Heart right ventricle (tissue), 16 donors: ENCODE measurements at regions of chr12 and their contacts with region 1.

Region 1: DNA sequence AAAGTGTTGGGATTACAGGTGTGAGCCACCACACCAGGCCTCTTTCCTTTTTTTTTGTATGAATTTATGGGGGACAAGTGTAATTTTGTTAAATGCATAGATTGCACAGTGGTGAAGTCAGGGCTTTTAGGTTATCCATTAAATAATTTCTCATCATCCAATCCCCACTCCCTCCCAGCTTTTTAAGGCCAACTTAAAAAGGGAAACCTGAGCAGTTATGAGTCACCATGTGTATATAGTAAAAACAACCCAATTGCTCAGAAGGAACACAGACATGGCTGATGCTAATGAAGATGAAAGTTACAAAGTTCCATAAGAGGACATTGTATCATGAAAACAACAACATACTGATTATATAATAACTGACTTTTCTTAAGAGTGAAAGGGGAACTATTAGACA is 25.6 kb upstream of the ARID2 start:
- DNase-seq: no peak
- ATAC-seq: no peak
- H3K4me3 ChIP-seq: no peak overlapping the region
- H3K27ac ChIP-seq: no peak overlapping the region
- H3K4me1 ChIP-seq: peaks cover 0 to 30% (median 15%) of the 10 kb centered on the region in 9 donors
- H3K27me3 ChIP-seq: no peaks in the 10 kb centered on the region
- CTCF ChIP-seq: no peak

Region 2: GRCh38 chr12:45670346-45671065 is 33.4 kb before region 1 on chr12:
- intact Hi-C with region 1: loop called in 1 of 10 experiments (anchors 2 kb)
- DNase-seq: no peak
- ATAC-seq: no peak
- H3K4me3 ChIP-seq: no peak overlapping the region
- H3K27ac ChIP-seq: peak overlapping the region in 8 of 10 donors; percentile 45 to 85 (median 76)
- H3K4me1 ChIP-seq: peaks cover 0 to 59% (median 14%) of the 10 kb centered on the region in 9 donors
- H3K27me3 ChIP-seq: no peaks in the 10 kb centered on the region
- CTCF ChIP-seq: no peak